H1 (cell line): ENCODE measurements at regions of chr13 and their contacts with region 1.

Region 1: GRCh38 chr13:24627099-24627714 is 53.0 kb upstream of the ATP12A start:
- DNase-seq: peak; percentile 46 to 94
- H3K4me3 ChIP-seq: no peak overlapping the region
- H3K27ac ChIP-seq: no peak overlapping the region
- H3K4me1 ChIP-seq: peaks cover 0 to 9% (median 2%) of the 10 kb centered on the region in 4 experiments; a peak in 3 of 7 replicates
- H3K27me3 ChIP-seq: peaks cover 0 to 5% (median 1%) of the 10 kb centered on the region in 4 experiments; a peak in 2 of 7 replicates
- CTCF ChIP-seq: peak; percentile 97 to 99 (median 98)
- EP300 ChIP-seq: peak in 1 of 2 experiments; percentile 21; a peak in 1 of 3 replicates
- POLR2A ChIP-seq: no peak
- RAD21 ChIP-seq: peak; percentile 80 to 87

Region 2: GRCh38 chr13:24540236-24541126 is 86.7 kb before region 1 on chr13:
- CTCF ChIA-PET with region 1: no interaction called
- POLR2A ChIA-PET with region 1: no interaction called
- DNase-seq: peak; percentile 54 to 95
- H3K4me3 ChIP-seq: peak overlapping the region in 3 of 4 experiments; percentile 42 to 63 (median 49); a peak in 4 of 8 replicates
- H3K27ac ChIP-seq: no peak overlapping the region
- H3K4me1 ChIP-seq: peaks cover 0 to 11% (median 0%) of the 10 kb centered on the region in 4 experiments; a peak in 1 of 7 replicates
- H3K27me3 ChIP-seq: peaks cover 2 to 10% (median 9%) of the 10 kb centered on the region in 4 experiments
- CTCF ChIP-seq: peak; percentile 82 to 88 (median 84)
- EP300 ChIP-seq: no peak
- POLR2A ChIP-seq: no peak
- RAD21 ChIP-seq: peak; percentile 61 to 74

Region 3: DNA sequence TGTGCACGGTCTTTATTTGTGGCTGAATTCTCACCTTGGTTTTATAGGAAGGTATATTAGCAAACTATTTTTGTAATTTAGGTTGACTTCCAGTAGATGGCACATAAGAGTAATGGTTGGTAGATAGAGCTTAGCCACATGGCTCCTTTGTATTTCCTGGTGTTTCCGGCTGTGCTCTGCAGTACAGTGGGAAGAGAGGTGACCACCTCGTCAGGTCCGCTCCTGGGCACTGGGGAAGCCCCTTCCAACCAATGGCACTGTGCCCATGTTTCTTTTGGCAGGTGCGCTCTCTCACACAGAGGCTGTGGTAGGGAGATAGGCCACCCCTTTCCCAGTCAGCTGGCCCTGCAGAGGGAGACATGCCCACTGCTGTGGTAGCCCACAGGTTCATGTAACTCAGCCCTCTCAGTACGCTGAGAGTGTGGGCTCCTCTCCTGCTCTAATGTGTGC is 21.3 kb before region 1 on chr13:
- CTCF ChIA-PET with region 1: interaction called, 141 read pairs
- POLR2A ChIA-PET with region 1: no interaction called
- DNase-seq: peak in 1 of 2 experiments; percentile 63
- H3K4me3 ChIP-seq: no peak overlapping the region
- H3K27ac ChIP-seq: no peak overlapping the region
- H3K4me1 ChIP-seq: peaks cover 0 to 3% (median 2%) of the 10 kb centered on the region in 4 experiments; a peak in 3 of 7 replicates
- H3K27me3 ChIP-seq: 0 out of 7 replicates have a peak, but pooled peaks cover 0 to 4% (median 0%) of the 10 kb centered on the region in 4 experiments
- CTCF ChIP-seq: peak in 2 of 3 experiments; percentile 31 to 53; a peak in 2 of 4 replicates
- EP300 ChIP-seq: no peak
- POLR2A ChIP-seq: 0 out of 3 replicates have a peak, but pooled peaks of 1 of the 2 experiments have one; percentile 32
- RAD21 ChIP-seq: peak; percentile 47 to 61; a peak in 3 of 4 replicates

Region 4: GRCh38 chr13:24644036-24644435 is 16.8 kb after region 1 on chr13:
- CTCF ChIA-PET with region 1: interaction called, 14 read pairs
- POLR2A ChIA-PET with region 1: no interaction called
- DNase-seq: no peak
- H3K4me3 ChIP-seq: no peak overlapping the region
- H3K27ac ChIP-seq: no peak overlapping the region
- H3K4me1 ChIP-seq: peaks cover 0 to 1% (median 0%) of the 10 kb centered on the region in 4 experiments; a peak in 3 of 7 replicates
- H3K27me3 ChIP-seq: no peaks in the 10 kb centered on the region
- CTCF ChIP-seq: no peak
- EP300 ChIP-seq: no peak
- POLR2A ChIP-seq: no peak
- RAD21 ChIP-seq: no peak

Region 5: GRCh38 chr13:24661713-24662112 is 34.5 kb after region 1 on chr13:
- CTCF ChIA-PET with region 1: interaction called, 24 read pairs
- POLR2A ChIA-PET with region 1: no interaction called
- DNase-seq: no peak
- H3K4me3 ChIP-seq: no peak overlapping the region
- H3K27ac ChIP-seq: no peak overlapping the region
- H3K4me1 ChIP-seq: no peaks in the 10 kb centered on the region
- H3K27me3 ChIP-seq: no peaks in the 10 kb centered on the region
- CTCF ChIP-seq: no peak
- EP300 ChIP-seq: no peak
- POLR2A ChIP-seq: no peak
- RAD21 ChIP-seq: no peak

Region 6: DNA sequence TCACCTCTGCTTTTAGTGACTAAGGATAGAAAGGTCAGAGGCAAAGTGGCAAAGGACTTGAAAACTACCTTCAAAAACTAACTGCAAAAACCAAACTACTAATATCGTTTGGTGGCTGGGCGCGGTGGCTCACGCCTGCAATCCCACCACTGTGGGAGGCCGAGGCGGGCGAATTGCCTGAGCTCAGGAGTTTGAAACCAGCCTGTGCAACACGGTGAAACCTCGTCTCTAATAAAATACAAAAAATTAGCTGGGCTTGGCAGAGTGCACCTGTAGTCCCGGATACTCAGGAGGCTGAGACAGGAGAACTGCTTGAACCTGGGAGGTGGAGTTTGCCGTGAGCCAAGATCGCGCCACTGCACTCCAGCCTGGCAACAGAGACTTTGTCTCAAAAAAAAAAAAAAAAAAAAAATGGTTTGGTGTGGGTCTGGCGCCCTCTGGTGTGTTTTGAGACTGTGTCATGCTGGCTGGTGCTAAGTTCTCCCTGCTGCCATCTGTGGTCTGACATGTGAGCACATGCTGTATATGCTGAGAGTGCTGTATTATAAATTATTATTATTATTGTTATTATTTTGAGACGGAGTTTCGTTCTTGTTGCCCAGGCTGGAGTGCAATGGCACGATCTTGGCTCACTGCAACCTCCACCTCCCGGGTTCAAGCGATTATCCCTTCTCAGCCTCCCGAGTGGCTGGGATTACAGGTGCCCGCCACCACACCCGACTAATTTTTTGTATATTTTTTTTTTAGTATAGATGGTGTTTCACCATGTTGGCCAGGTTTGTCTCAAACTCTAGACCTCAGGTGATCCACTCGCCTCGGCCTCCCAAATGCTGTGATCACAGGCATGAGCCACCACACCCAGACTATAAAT is 100.8 kb after region 1 on chr13:
- CTCF ChIA-PET with region 1: interaction called, 27 read pairs
- POLR2A ChIA-PET with region 1: no interaction called
- DNase-seq: peak in 1 of 2 experiments; percentile 63
- H3K4me3 ChIP-seq: no peak overlapping the region
- H3K27ac ChIP-seq: no peak overlapping the region
- H3K4me1 ChIP-seq: no peaks in the 10 kb centered on the region
- H3K27me3 ChIP-seq: no peaks in the 10 kb centered on the region
- CTCF ChIP-seq: peak; percentile 78 to 99 (median 78)
- EP300 ChIP-seq: no peak
- POLR2A ChIP-seq: no peak
- RAD21 ChIP-seq: peak; percentile 90 to 91